GM13977 (cell line): ENCODE measurements at regions of chr15 and their contacts with region 1.

Region 1: GRCh38 chr15:45200001-45200798 is 12.4 kb upstream of the SHF start:
- DNase-seq: peak; percentile 76
- CTCF ChIP-seq: no peak

Region 2: DNA sequence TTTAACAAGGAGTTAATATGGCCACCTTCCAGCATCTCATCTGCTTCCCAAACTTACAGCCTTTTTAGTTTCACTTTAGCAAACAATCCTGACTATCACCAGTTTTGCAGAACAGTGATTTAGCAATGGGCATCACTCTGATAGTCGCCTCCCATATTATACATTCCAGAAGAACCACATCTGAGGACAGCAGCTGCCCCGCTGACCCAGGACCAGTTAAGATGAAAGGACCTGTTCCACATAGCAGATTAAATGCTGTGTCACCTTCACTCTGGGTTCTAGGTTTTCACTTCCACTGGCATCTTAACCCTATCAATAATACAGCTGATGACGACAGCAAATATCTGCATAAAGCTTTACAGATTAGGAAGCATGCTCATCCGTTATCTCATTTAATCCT is 364.1 kb before region 1 on chr15:
- in situ Hi-C with region 1: no loop called
- DNase-seq: no peak
- CTCF ChIP-seq: no peak

Region 3: GRCh38 chr15:45333550-45333949 is 133.3 kb after region 1 on chr15:
- in situ Hi-C with region 1: no loop called
- DNase-seq: no peak
- CTCF ChIP-seq: no peak

Region 4: DNA sequence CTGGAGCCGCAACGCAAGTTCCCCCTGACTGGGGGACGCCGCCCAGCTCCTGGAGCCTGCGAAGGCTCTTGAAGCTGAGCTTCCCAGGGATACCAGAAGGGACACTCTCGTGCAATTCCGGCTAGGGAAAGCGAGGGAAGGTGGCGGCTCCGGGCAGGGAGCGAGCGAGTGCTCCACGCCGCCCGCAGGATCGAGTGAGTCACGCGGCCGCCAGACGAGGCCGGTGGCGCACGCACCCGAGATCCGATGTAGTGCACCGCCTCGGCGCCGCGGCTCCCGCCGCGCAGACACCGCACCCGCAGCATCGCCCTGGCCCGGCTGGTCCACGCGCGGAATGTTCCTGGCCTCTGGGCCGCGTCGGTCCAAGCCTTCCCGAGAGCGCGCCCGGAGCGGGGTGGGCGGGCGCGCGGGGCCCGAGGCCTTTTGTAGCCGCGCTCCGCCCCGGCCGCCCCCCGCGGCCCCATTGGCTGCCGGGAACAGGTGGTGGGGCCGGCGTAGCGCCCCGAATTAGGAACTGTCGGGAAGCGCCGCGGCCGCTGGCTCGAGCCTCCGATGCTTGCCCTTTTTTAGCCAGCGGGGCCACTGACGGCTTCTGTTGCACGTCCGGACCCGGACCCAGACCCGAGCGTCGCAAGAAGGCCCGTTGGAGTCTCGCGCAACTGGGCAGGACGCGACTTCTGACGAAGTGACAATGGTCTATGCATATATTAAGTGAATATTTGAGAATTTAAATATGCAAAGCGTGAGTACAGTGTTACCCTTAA is 178.1 kb after region 1 on chr15 and contains the start of gene GATM:
- in situ Hi-C with region 1: loop called (anchors 25 kb)
- DNase-seq: peak; percentile 91
- CTCF ChIP-seq: no peak

Region 5: GRCh38 chr15:45510758-45511280 is 310.6 kb after region 1 on chr15:
- in situ Hi-C with region 1: no loop called
- DNase-seq: no peak
- CTCF ChIP-seq: no peak